Head of caudate nucleus (tissue), 42 donors: ENCODE measurements at regions of chr4 and their contacts with region 1.

Region 1: GRCh38 chr4:141133146-141133998 is at the start of gene RNF150:
- DNase-seq: peak; percentile 68 to 94 (median 84)

Region 2: GRCh38 chr4:140861359-140862176 is 271.8 kb before region 1 on chr4:
- intact Hi-C with region 1: loop called (anchors 5 kb)
- DNase-seq: peak in 39 of 42 donors; percentile 10 to 90 (median 72)

Region 3: GRCh38 chr4:141702472-141703182 is 569.3 kb after region 1 on chr4:
- intact Hi-C with region 1: no loop called
- DNase-seq: no peak